GM10248 (cell line): ENCODE measurements at regions of chr18 and their contacts with region 1.

Region 1: DNA sequence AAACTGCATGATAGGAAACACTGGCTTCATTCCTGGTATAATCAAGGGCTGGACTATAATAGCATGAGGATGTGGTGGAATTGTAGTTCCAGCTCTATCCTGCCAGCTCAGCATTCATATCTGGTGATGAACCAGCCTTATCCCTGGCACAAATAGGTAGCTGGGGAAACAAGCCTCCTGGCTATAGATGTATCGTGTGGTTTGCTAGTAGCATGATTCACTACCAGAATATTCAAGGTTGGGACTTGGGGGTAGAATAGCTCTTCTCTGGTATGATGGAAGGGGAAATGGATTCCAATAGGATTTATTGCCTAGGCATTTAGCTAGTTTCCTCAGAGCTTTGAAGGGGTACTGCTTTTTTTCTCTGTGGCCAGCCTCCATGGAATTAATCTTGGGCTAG is 532.8 kb downstream of the FBXO15 start:
- DNase-seq: no peak
- CTCF ChIP-seq: no peak

Region 2: DNA sequence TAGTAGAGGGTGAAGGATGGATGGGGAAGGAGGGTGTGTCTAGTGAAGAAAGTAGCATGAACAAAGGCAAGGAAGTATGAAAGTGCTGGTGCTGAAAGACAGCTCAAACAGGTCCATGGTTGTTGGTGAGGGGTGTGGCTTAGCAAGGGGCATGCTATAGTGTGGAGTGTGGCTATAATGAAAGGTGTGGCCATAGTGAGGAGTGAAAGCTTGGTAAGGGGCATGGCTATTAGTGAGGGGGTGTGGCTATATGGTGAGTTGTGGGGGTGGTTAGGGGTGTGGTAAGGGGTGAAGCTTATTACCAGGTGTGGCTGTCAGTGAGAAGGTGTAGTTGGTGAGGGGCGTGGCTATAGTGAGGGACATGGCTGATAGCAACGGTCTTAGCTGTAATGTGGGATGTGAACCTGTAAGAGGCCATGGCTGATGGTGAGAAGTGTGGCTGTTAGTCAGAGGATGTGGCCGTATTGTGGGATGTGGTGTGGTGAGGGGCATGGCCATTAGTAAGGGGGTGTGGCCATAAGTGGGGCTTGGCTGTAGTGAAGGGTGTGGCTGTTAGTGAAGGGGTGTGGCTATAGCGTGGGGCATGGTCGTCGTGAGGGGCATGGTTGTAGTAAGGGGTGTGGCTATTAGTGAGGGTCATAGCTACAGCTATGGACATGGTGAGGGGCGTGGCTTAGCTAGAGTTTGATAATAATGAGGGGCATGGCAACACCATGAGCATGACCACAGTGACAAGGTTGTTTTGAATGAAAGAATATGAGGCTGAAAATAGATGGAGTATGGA is 16.8 kb before region 1 on chr18:
- CTCF ChIA-PET with region 1: interaction called, 11 read pairs
- POLR2A ChIA-PET with region 1: no interaction called
- DNase-seq: no peak
- CTCF ChIP-seq: no peak